ENCODE measurements at regions of chr2 and their contacts with region 1.

Region 1: DNA sequence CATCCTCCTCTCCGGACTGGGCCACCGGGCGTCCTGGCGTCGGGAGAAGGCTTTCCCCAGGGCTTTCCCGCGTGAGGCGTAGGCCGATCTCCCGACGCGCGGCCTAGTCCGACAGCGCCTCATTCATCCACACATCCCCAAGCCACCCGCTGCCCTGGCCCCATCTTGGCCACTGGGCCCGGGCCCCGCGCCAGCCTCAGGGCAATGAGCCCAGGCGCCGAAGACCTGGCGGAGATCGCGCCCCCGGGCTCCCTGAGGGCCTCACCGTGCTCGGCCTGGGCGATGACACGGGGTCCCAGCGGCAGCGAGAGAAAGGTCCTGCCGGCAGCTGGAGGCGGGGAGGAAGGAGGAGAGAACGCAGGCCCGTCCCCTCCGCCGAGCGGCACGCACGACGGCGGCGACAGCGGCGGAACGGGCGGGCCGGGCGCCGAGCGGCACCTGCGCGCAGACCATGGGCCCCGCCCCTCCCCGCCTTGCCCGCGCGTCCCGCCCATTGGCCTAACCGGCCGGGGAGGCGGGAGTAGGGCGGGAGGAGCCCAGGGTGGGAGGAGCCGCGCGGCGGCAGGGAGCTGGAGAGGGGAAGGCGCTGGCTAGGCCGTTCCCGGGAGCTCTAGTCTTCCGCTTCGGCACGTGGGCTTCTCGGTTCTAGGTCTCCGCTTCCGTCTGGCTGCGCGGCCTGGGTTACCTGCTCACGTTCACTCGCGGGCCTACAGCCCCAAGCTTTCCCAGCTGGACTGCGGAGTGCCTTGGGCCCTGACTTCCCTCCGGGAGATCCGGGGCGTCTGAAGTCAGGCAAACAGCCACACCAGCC is at the start of gene OLA1:
- DNase-seq: peak; percentile 94
- H3K4me3 ChIP-seq: peak within 1 kb of the TSS; percentile 38 to 88 (median 77)
- H3K27ac ChIP-seq: peak within 1 kb of the TSS; percentile 70
- H3K4me1 ChIP-seq: peaks cover 21% of the 10 kb centered on the region
- H3K27me3 ChIP-seq: no peaks in the 10 kb centered on the region
- CTCF ChIP-seq: no peak
- POLR2A ChIP-seq: peak; percentile 90
- total RNA-seq, gene OLA1: 93.9 and 99.6 TPM in 2 replicates

Region 2: DNA sequence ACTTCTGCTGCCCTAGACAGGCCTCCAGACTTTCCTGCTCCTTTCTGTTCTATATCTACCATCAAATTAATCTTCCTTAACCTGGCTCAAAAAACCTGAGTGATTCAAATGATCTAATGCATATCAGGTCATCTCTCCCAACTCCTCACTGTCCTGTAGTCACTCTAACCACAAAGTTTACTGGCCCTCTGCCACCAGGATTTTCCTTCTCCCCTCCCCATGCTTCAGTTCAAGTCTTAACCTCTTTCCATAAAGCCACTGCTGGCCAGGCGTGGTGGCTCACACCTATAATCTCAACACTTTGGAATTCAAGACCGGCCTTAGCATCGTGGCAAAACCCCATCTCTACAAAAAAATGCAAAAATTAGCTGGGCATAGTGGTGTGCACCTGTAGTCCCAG is 275.8 kb before region 1 on chr2:
- CTCF ChIA-PET with region 1: no interaction called
- POLR2A ChIA-PET with region 1: no interaction called
- dilution Hi-C with region 1: no loop called
- intact Hi-C with region 1: loop called (anchors 2 kb)
- DNase-seq: no peak
- H3K4me3 ChIP-seq: no peak overlapping the region
- H3K27ac ChIP-seq: no peak overlapping the region
- H3K4me1 ChIP-seq: no peaks in the 10 kb centered on the region
- H3K27me3 ChIP-seq: no peaks in the 10 kb centered on the region
- CTCF ChIP-seq: no peak
- POLR2A ChIP-seq: no peak

Region 3: DNA sequence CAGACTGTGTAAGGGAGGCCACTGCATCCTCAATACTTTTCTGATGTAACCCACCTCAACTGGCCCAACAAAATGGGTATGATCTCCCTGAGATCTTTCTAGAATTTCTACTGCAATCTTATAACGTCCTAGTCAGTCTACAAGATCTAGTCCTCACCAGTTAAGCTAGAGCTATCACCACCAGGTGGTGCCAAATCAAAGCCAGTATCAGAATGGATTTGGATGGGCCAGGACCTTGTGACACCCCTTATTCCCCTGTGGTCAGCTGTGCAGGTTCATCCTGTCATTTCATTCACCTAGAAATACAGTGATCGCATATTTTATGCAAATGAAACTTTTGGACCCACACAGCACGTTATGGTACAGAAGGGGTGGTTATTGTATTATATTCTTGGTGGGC is 90.4 kb before region 1 on chr2:
- CTCF ChIA-PET with region 1: interaction called, 6 read pairs
- POLR2A ChIA-PET with region 1: no interaction called
- dilution Hi-C with region 1: no loop called
- intact Hi-C with region 1: loop called (anchors 5 kb)
- DNase-seq: peak; percentile 29
- H3K4me3 ChIP-seq: no peak overlapping the region
- H3K27ac ChIP-seq: no peak overlapping the region
- H3K4me1 ChIP-seq: peaks cover 11% of the 10 kb centered on the region
- H3K27me3 ChIP-seq: no peaks in the 10 kb centered on the region
- CTCF ChIP-seq: peak; percentile 45 to 57
- POLR2A ChIP-seq: no peak

Region 4: GRCh38 chr2:174465327-174465726 is 216.9 kb after region 1 on chr2:
- CTCF ChIA-PET with region 1: no interaction called
- POLR2A ChIA-PET with region 1: no interaction called
- dilution Hi-C with region 1: no loop called
- intact Hi-C with region 1: no loop called
- DNase-seq: no peak
- H3K4me3 ChIP-seq: no peak overlapping the region
- H3K27ac ChIP-seq: no peak overlapping the region
- H3K4me1 ChIP-seq: no peaks in the 10 kb centered on the region
- H3K27me3 ChIP-seq: no peaks in the 10 kb centered on the region
- CTCF ChIP-seq: no peak
- POLR2A ChIP-seq: no peak

Region 5: DNA sequence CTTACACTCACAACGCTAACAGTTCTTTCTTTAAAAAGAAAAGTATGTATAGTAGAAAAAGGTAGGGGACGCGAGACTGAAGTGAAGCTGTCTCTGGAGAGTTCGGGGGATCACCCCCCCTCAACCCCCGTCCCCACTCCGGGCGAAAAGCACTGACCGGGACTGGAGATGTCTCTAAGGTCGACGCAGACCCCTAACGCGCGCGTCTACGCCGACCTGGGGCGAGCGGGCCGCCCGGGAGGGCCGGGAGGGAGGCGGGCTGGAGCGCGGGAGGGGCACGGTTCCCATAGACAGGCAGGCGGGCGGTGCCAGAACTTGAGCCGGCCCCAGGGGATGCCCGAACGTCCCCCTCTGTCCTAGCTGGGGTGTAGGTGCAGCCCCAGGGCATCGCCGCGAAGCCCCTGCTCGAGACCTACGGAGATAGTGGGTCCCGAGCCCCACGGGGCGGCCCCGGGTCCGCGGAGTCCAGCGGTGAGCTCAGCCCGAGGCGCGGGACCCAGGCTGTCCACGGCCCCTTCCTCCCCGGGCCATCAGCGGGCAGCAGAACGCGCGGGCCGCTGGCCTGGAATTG is 433.7 kb after region 1 on chr2:
- CTCF ChIA-PET with region 1: no interaction called
- POLR2A ChIA-PET with region 1: no interaction called
- dilution Hi-C with region 1: no loop called
- intact Hi-C with region 1: no loop called
- DNase-seq: peak; percentile 55
- H3K4me3 ChIP-seq: peak overlapping the region; percentile 91 to 94 (median 93)
- H3K27ac ChIP-seq: peak overlapping the region; percentile 32
- H3K4me1 ChIP-seq: peaks cover 16% of the 10 kb centered on the region
- H3K27me3 ChIP-seq: peaks cover 3 to 5% of the 10 kb centered on the region in 2 experiments
- CTCF ChIP-seq: no peak
- POLR2A ChIP-seq: no peak

Measured in endothelial cell of umbilical vein (primary cell).